Caco-2 (cell line): ENCODE measurements at regions of chr2 and their contacts with region 1.

Region 1: GRCh38 chr2:3651691-3652648 is 6.0 kb upstream of the ALLC start:
- DNase-seq: peak; percentile 75 to 77
- H3K4me3 ChIP-seq: peak overlapping the region; percentile 37
- H3K4me3 Mint-ChIP-seq: peak overlapping the region; percentile 60
- H3K27ac Mint-ChIP-seq: peak overlapping the region; percentile 79
- H3K4me1 ChIP-seq: peaks cover 7% of the 10 kb centered on the region; the same call in 1 of the 2 replicates
- H3K4me1 Mint-ChIP-seq: peaks cover 9% of the 10 kb centered on the region
- H3K27me3 ChIP-seq: no peaks in the 10 kb centered on the region
- H3K27me3 Mint-ChIP-seq: no peaks in the 10 kb centered on the region
- CTCF ChIP-seq: no peak

Region 2: DNA sequence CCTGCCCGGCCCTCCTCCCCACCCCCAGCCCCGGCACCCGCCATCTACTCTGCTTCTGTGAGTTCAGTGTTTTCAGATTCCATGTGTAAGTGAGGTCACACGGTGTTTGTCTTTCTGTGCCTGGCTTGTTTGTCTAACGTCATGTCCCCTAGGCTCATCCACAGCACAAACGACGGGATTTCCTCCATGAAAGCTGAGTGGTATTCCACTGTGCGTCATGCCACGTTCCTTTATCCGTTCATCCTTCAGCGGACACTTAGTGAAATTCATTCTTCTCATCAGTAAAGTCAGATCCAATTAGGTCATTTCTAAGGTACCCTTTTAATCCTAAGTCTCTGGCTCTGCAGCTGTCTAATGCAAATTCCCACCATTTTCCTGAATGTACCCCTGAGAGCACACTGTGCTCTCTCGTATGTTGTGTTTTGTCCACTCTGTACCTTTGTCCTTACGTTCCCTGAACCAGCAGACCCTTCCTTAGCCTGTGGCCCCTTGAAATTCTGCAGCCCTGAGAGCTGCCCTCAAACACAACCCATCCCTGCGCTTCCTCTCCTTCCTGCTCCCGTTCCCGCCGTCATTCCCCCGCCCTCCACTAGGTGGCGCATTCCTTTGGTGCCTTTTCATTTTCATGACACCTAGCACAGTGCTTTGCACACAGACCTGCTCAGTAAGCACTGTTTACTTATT is 228.3 kb before region 1 on chr2:
- CTCF ChIA-PET with region 1: interaction called, 9 read pairs
- POLR2A ChIA-PET with region 1: no interaction called
- intact Hi-C with region 1: loop called (anchors 1 kb)
- DNase-seq: peak; percentile 76 to 84
- H3K4me3 ChIP-seq: no peak overlapping the region
- H3K4me3 Mint-ChIP-seq: no peak overlapping the region
- H3K27ac Mint-ChIP-seq: no peak overlapping the region
- H3K4me1 ChIP-seq: 0 out of 2 replicates have a peak, but pooled peaks cover 3% of the 10 kb centered on the region
- H3K4me1 Mint-ChIP-seq: peaks cover 8% of the 10 kb centered on the region
- H3K27me3 ChIP-seq: no peaks in the 10 kb centered on the region
- H3K27me3 Mint-ChIP-seq: no peaks in the 10 kb centered on the region
- CTCF ChIP-seq: peak; percentile 90 to 97

Region 3: GRCh38 chr2:3483227-3483985 is 168.6 kb before region 1 on chr2:
- CTCF ChIA-PET with region 1: no interaction called
- POLR2A ChIA-PET with region 1: no interaction called
- intact Hi-C with region 1: loop called (anchors 1 kb)
- DNase-seq: peak; percentile 98 to 99
- H3K4me3 ChIP-seq: peak overlapping the region; percentile 42
- H3K4me3 Mint-ChIP-seq: peak overlapping the region; percentile 77
- H3K27ac Mint-ChIP-seq: peak overlapping the region; percentile 93
- H3K4me1 ChIP-seq: peaks cover 12% of the 10 kb centered on the region
- H3K4me1 Mint-ChIP-seq: peaks cover 10% of the 10 kb centered on the region
- H3K27me3 ChIP-seq: no peaks in the 10 kb centered on the region
- H3K27me3 Mint-ChIP-seq: no peaks in the 10 kb centered on the region
- CTCF ChIP-seq: no peak

Region 4: GRCh38 chr2:3558205-3559014 is 93.6 kb before region 1 on chr2 and contains the start of gene RNASEH1:
- CTCF ChIA-PET with region 1: interaction called, 7 read pairs
- POLR2A ChIA-PET with region 1: interaction called, 4 read pairs
- intact Hi-C with region 1: loop called (anchors 1 kb)
- DNase-seq: peak; percentile 99
- H3K4me3 ChIP-seq: peak within 1 kb of the TSS; percentile 81
- H3K4me3 Mint-ChIP-seq: peak within 1 kb of the TSS; percentile 92
- H3K27ac Mint-ChIP-seq: peak within 1 kb of the TSS; percentile 95
- H3K4me1 ChIP-seq: peaks cover 6% of the 10 kb centered on the region; the same call in 1 of the 2 replicates
- H3K4me1 Mint-ChIP-seq: peaks cover 12% of the 10 kb centered on the region
- H3K27me3 ChIP-seq: no peaks in the 10 kb centered on the region
- H3K27me3 Mint-ChIP-seq: no peaks in the 10 kb centered on the region
- CTCF ChIP-seq: no peak
- total RNA-seq, gene RNASEH1: 41.5 and 47.1 TPM in 2 replicates

Region 5: GRCh38 chr2:3628800-3629199 is 23.2 kb before region 1 on chr2:
- CTCF ChIA-PET with region 1: interaction called, 6 read pairs
- POLR2A ChIA-PET with region 1: no interaction called
- intact Hi-C with region 1: loop called (anchors 1 kb)
- DNase-seq: peak; percentile 47 to 60
- H3K4me3 ChIP-seq: no peak overlapping the region
- H3K4me3 Mint-ChIP-seq: no peak overlapping the region
- H3K27ac Mint-ChIP-seq: no peak overlapping the region
- H3K4me1 ChIP-seq: no peaks in the 10 kb centered on the region
- H3K4me1 Mint-ChIP-seq: no peaks in the 10 kb centered on the region
- H3K27me3 ChIP-seq: no peaks in the 10 kb centered on the region; the same call in 1 of the 2 replicates
- H3K27me3 Mint-ChIP-seq: no peaks in the 10 kb centered on the region
- CTCF ChIP-seq: peak; percentile 25 to 51